Prostate gland (tissue), 2 donors: ENCODE measurements at regions of chr11 and their contacts with region 1.

Region 1: GRCh38 chr11:45298718-45299117 is 12.6 kb upstream of the SYT13 start:
- DNase-seq: no peak
- H3K4me3 ChIP-seq: no peak overlapping the region
- H3K27ac ChIP-seq: no peak overlapping the region
- H3K4me1 ChIP-seq: no peaks in the 10 kb centered on the region
- H3K27me3 ChIP-seq: no peaks in the 10 kb centered on the region
- CTCF ChIP-seq: no peak
- POLR2A ChIP-seq: no peak

Region 2: DNA sequence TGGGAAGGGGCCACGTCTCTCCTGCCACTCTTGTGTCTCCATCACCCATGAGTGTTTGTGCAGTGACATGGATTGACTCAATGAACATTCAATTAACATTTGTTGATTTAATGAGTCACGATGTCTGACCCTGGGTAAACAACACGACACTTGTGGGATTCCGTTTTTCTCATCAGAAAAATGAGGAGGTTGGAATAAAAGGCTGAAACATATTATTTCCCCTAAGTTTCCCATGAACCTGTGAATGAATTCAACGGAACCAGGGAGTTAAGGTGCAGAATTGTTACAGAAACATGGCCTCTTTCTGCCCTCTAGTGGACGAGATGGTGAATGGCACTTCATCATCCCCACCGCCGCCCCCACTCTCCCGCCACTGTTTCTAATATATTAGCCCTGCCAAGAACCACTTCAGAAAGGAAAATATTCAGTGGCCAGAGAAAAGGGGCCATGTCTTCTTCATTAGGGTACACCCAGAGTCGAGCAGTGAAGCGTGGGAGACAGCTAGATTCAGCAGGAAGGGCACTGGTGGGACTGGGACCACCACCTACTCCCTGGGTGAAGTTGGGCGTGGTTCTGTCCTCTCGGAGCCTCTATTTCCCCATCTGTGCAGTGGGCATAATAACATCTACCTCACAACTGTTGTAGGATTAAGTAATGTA is 33.7 kb after region 1 on chr11:
- intact Hi-C with region 1: loop called (anchors 5 kb)
- DNase-seq: no peak
- H3K4me3 ChIP-seq: no peak overlapping the region
- H3K27ac ChIP-seq: no peak overlapping the region
- H3K4me1 ChIP-seq: no peaks in the 10 kb centered on the region
- H3K27me3 ChIP-seq: no peaks in the 10 kb centered on the region
- CTCF ChIP-seq: peak; percentile 47 to 84 (median 65)
- POLR2A ChIP-seq: no peak